Activated CD4-positive, alpha-beta memory T cell treated with anti-CD3 and anti-CD28 coated beads for 36 hours (primary cell): ENCODE measurements at regions of chr5 and their contacts with region 1.

Region 1: DNA sequence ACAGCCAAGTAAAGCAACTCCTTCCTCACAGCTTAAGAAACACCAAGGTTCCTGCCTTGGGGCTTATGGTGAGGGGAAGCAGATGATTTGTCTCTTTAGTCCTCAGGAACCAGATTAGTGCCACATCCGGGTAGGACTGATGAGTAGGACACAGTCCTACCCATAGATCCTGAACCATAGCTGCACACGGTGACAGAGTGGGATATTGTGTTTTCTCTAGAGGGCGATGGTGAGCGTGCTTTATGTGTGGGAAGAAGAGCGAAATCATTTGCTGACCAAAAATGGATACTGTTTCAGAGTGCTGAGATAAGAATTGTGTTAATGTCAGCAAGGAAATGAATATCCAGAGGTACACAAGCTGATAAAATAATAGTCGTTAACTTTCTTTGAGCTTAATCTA is 209.0 kb upstream of the FBXL7 start:
- DNase-seq: no peak
- H3K4me3 Mint-ChIP-seq: no peak overlapping the region
- H3K27ac Mint-ChIP-seq: no peak overlapping the region
- H3K4me1 Mint-ChIP-seq: no peaks in the 10 kb centered on the region
- H3K27me3 Mint-ChIP-seq: no peaks in the 10 kb centered on the region

Region 2: DNA sequence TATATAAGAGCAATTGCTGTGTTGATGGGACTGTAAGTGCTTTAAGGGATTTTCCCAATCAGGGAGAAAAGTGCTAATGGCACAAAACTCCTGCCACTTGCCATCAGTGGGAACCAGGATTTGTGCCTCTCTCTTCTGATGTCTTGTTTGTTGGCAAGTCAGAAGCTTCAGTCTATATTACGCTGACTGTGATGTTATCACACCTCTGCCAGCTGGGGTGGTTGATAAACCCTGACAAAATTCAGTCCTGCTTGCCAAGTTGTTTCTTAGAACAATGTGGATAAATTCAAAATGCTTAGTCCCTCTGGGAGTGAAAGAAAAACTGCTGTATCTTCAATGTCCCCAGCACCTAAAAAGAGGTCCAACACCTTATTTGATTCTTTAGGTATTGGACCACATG is 47.6 kb after region 1 on chr5:
- CTCF ChIA-PET with region 1: no interaction called
- POLR2A ChIA-PET with region 1: no interaction called
- intact Hi-C with region 1: loop called (anchors 1 kb)
- DNase-seq: no peak
- H3K4me3 Mint-ChIP-seq: no peak overlapping the region
- H3K27ac Mint-ChIP-seq: no peak overlapping the region
- H3K4me1 Mint-ChIP-seq: no peaks in the 10 kb centered on the region
- H3K27me3 Mint-ChIP-seq: no peaks in the 10 kb centered on the region